ENCODE measurements at regions of chr3 and their contacts with region 1.

Region 1: DNA sequence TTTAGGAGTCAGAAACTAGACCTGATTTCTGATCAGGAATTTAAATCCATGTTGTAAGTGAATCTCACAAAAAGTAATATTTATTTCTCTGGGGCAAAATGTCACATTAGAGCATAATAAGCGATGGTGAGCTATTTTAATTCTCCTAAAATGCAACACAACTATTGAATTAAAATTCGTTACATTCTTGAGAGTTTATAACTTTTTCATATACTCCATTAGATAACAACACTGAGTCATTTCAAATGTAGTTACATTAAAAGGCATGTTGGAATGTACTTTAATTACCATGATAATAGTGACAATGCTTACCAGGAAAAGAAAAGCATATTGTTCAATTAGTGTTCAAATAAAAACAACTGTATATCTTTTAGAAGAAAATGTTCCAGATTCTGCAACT is 116.9 kb downstream of the CADM2 start:
- DNase-seq: no peak
- H3K4me3 Mint-ChIP-seq: no peak overlapping the region
- H3K27ac Mint-ChIP-seq: no peak overlapping the region
- H3K4me1 Mint-ChIP-seq: no peaks in the 10 kb centered on the region
- H3K27me3 Mint-ChIP-seq: no peaks in the 10 kb centered on the region

Region 2: DNA sequence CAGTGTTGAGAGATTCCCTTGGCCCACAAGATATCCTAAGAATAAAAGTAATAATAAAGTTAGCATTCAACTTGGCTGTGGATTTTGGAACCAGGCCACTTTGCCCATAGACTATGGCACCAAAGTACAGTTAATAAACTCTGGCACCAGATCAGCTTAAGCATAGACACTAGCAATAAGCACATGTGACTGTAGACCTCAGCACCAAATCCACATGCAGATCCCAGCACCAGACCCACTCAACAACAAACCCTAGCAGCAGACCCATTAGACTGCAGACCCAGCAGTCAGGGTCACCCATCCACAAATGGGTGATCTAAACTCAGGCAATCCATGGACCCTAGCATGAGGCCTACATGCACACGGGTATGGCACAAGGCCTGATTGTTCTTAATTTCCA is 501.7 kb before region 1 on chr3:
- CTCF ChIA-PET with region 1: no interaction called
- POLR2A ChIA-PET with region 1: no interaction called
- intact Hi-C with region 1: no loop called
- DNase-seq: no peak
- H3K4me3 Mint-ChIP-seq: no peak overlapping the region
- H3K27ac Mint-ChIP-seq: no peak overlapping the region
- H3K4me1 Mint-ChIP-seq: no peaks in the 10 kb centered on the region
- H3K27me3 Mint-ChIP-seq: no peaks in the 10 kb centered on the region

Region 3: GRCh38 chr3:85116736-85117135 is 41.1 kb after region 1 on chr3:
- CTCF ChIA-PET with region 1: no interaction called
- POLR2A ChIA-PET with region 1: no interaction called
- intact Hi-C with region 1: loop called (anchors 1 kb)
- DNase-seq: no peak
- H3K4me3 Mint-ChIP-seq: no peak overlapping the region
- H3K27ac Mint-ChIP-seq: no peak overlapping the region
- H3K4me1 Mint-ChIP-seq: no peaks in the 10 kb centered on the region
- H3K27me3 Mint-ChIP-seq: no peaks in the 10 kb centered on the region

Measured in activated CD4-positive, alpha-beta memory T cell treated with anti-CD3 and anti-CD28 coated beads for 36 hours (primary cell).